Activated CD8-positive, alpha-beta T cell treated with anti-CD3 and anti-CD28 coated beads, Interleukin-2, amount 10 ng/mL, durations not matched to agents 7 days and 5 days (primary cell): ENCODE measurements at regions of chr19 and their contacts with region 1.

Region 1: DNA sequence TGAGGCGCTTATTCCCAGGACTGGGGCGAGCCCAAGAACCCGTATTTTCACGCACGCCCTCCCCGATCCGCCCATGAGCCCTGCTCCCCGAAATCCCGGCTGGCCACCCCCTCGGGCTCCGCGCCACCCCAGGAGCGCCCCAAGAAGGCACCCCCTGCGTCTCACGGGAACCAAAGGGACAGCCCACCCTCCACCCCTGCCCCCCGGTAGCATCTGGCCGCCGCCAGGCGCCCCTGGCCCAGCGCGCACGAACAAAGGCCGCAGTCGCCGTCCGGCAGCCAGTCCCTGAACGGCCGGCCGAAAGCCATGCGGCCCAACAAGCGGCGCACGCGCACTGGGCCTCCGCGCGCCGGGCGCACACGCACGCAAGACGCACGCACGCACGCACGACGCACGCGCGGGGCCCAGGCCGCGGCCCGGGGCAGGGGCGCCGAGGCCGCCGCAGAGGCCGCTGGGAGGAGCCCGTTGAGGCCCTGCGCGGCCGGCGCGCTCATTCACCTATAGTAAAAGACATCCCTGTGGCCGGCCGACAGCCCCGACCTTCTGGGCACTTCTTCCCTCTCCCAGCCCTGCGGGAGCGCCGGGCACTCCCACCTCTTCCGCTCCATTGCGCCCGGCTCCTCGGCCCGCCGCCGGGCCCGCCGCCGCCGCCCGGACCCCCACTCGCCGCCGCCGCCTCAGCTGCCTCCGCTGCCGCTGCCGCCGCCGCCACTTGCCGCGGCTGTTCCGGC is 476 bp downstream of the MBD3 start:
- DNase-seq: peak; percentile 85
- ATAC-seq: peak; percentile 83
- H3K4me3 Mint-ChIP-seq: peak overlapping the region; percentile 84
- H3K27ac Mint-ChIP-seq: peak overlapping the region; percentile 87
- H3K4me1 Mint-ChIP-seq: peaks cover 24% of the 10 kb centered on the region
- H3K27me3 Mint-ChIP-seq: no peaks in the 10 kb centered on the region

Region 2: DNA sequence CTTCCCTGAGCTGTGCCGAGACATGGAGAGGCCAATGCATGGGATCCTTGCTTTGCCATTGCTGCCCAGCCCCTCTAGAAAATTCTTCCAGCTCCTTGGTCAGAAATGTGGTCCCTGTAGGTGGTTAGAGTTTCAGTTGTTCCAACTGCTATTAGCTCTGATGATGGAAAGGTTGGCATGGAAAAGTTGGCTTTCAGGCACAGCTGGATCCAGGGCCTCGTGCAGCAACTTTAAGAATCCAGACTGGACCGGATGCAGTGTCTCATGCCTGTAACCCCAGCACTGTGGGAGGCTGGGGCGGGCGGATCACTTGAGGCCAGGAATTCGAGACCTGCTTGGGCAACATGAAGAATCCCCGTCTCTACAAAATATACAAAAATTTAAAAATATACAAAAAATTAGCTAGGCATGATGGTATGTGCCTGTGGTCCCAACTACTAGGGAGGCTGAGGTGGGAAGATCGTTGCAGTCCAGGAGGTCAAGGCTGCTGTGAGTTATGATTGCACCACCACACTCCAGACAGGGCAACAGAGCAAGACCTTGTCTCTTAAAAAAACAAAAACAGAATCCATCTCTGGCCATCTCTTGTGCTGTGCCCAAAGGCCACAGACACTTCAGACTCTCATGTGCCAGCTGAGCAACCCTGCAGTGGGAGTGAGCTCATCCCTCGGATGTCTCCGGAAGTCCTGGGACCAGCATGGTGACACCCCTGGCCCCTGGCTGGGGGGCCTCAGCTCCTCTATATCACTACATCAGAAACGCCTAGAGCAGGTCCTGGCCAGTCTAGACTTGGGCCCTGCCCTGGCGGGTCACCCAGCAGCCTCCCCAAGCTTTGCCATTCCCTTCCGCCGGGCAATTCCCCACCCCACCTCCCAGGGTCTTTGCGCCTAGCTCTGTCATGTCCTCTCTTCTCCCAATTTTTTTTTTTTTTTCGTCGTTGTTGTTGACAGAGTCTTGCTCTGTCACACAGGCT is 40.8 kb before region 1 on chr19:
- CTCF ChIA-PET with region 1: interaction called, 12 read pairs
- POLR2A ChIA-PET with region 1: no interaction called
- DNase-seq: no peak
- ATAC-seq: no peak
- H3K4me3 Mint-ChIP-seq: no peak overlapping the region
- H3K27ac Mint-ChIP-seq: no peak overlapping the region
- H3K4me1 Mint-ChIP-seq: peaks cover under 1% of the 10 kb centered on the region
- H3K27me3 Mint-ChIP-seq: peaks cover 6% of the 10 kb centered on the region